ENCODE measurements at regions of chr7 and their contacts with region 1.

Region 1: DNA sequence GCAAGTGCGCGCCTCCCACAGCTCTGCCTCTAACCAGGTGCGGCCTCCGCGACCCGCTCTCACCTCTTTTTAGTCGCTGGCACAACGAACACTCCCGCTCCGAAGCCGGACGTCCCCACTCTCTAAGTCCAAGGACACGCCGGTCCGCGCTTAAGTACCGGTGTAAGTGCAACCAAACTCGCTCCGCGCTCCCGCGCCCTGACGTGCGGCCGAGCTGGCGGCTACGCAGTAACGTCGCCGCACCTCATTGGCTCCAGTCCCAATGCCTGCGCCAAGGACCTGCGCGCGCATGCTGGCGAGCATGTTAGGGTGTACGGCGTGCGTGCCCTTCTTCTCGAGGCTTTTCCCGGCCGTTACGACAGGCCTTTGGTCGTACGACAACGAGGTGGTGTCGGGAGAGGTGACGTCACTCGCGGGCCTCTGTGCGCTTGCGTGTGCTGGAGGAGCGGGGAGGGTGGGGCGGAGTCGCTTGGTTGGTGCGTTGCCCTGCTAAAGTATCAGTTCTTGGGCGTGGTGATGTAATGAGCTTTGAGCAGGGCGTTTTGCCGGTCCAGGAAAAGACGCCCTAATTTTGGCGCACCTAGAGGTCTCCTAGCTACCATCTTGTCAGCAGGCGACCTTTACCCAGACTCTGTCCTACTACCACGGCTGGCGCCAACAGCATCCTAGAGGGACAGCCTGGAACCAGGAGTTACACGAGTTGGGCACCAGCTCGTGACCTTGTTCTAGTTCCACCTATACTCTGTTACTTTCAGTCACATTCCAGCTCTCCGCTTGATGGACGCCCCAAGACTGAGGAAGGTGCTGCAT is at the start of gene CYCS:
- DNase-seq: peak; percentile 93 to 100 (median 94)
- ATAC-seq: peak; percentile 96
- H3K4me3 ChIP-seq: peak within 1 kb of the TSS; percentile 90
- H3K27ac ChIP-seq: peak within 1 kb of the TSS; percentile 96
- H3K4me1 ChIP-seq: peaks cover 2 to 3% of the 10 kb centered on the region in 2 experiments; a peak in 2 of 5 replicates
- H3K27me3 ChIP-seq: no peaks in the 10 kb centered on the region
- CTCF ChIP-seq: no peak
- EP300 ChIP-seq: peak; percentile 50
- POLR2A ChIP-seq: peak; percentile 99
- RAD21 ChIP-seq: no peak
- polyA plus RNA-seq, gene CYCS: 978 to 1,425 TPM

Region 2: DNA sequence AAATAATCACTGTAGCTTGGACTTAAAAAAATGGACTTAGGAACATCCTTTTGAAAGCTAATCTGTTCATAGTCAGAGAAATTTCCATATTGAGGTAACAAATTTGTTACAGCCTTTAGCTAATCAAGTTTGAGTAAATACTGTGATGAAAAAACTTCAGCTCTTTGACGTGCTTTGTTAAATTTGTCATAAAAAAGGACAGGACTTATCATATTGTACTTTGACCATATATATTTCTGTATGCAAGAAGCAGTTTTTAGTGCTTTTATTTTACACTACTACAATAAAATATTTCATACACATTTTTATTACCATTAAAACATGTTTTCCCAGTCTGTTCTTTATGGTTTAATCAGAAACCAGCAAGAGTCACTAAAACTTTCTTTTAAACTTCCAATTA is 14.2 kb after region 1 on chr7:
- CTCF ChIA-PET with region 1: no interaction called
- POLR2A ChIA-PET with region 1: interaction called, 17 read pairs
- in situ Hi-C with region 1: no loop called
- intact Hi-C with region 1: no loop called
- DNase-seq: no peak
- ATAC-seq: no peak
- H3K4me3 ChIP-seq: no peak overlapping the region
- H3K27ac ChIP-seq: no peak overlapping the region
- H3K4me1 ChIP-seq: no peaks in the 10 kb centered on the region
- H3K27me3 ChIP-seq: no peaks in the 10 kb centered on the region
- CTCF ChIP-seq: no peak
- EP300 ChIP-seq: no peak
- POLR2A ChIP-seq: no peak
- RAD21 ChIP-seq: no peak

Region 3: GRCh38 chr7:25148772-25149575 is 23.6 kb after region 1 on chr7:
- CTCF ChIA-PET with region 1: interaction called, 3 read pairs
- POLR2A ChIA-PET with region 1: interaction called, 18 read pairs
- in situ Hi-C with region 1: no loop called
- intact Hi-C with region 1: no loop called
- DNase-seq: peak in 1 of 4 experiments; percentile 28
- ATAC-seq: peak; percentile 75
- H3K4me3 ChIP-seq: no peak overlapping the region
- H3K27ac ChIP-seq: no peak overlapping the region
- H3K4me1 ChIP-seq: no peaks in the 10 kb centered on the region
- H3K27me3 ChIP-seq: no peaks in the 10 kb centered on the region
- CTCF ChIP-seq: peak; percentile 27 to 45 (median 32); a peak in 2 of 6 replicates
- EP300 ChIP-seq: no peak
- POLR2A ChIP-seq: no peak
- RAD21 ChIP-seq: no peak

Region 4: DNA sequence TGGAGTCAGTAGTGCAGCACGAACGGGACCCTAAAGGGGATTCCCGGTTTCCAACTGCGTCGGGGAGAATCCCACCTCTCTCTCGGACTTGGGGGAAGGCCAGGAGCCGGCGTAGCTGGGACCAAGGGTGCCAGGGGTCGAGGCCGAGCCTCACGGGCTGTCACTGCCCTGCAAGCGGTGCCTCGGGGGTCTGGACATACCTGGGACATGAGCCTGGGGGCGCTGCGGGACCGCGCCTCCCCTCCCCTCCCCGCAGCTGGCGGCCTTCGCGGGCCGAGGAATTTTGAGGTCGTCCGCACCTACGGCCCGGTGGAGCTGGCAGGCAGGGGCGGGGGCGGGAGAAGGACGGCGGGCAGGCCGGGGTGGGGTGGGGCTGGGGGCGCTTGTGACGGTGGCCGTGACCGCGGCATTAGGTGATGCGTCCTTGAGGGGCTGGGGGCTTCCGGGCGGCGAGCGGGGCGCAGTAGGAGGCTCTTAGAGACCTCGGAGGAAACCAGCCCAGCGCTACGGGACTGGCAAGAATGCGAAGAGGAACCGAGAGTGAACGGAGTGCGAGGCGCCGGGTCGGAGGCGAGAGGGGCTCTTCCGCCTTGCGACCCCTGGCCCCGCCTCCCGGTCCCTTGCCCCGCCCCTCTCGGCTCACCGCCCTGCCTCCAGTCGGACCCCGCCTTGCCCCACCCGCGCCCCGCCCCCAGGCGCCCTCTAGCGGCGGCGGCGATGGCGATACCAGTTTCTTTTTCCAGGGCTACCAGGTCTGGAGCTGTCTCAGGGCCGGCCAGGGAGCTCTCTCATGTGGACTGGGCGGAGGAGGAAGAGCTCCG is 54.6 kb after region 1 on chr7:
- CTCF ChIA-PET with region 1: no interaction called
- POLR2A ChIA-PET with region 1: interaction called, 11 read pairs
- in situ Hi-C with region 1: no loop called
- intact Hi-C with region 1: no loop called
- DNase-seq: peak; percentile 89 to 99 (median 98)
- ATAC-seq: peak; percentile 96
- H3K4me3 ChIP-seq: peak overlapping the region; percentile 51
- H3K27ac ChIP-seq: peak overlapping the region; percentile 69
- H3K4me1 ChIP-seq: peaks cover 8% of the 10 kb centered on the region in 2 experiments; a peak in 3 of 5 replicates
- H3K27me3 ChIP-seq: no peaks in the 10 kb centered on the region
- CTCF ChIP-seq: peak; percentile 48 to 86 (median 69)
- EP300 ChIP-seq: no peak
- POLR2A ChIP-seq: peak; percentile 78
- RAD21 ChIP-seq: peak in 1 of 2 experiments; percentile 35; a peak in 1 of 4 replicates

Region 5: DNA sequence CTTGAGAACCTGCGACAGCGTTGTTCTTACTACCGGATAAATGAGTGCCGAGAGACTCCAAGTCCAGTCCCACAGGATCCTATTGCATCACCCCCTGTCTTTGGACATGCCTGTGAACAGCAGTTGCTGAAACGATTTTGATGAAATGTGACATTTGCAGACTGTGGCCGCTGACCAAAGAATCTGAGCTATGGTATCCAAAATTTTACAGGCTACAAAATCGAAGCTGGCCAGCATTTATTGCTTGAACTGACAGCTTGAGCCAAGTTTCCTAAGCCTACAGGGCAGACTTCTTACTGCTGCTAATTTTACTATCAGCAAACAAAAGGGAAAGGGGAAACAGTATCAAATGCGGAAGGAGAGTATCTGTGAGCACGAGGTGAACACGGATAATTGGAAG is 115.0 kb after region 1 on chr7:
- CTCF ChIA-PET with region 1: no interaction called
- POLR2A ChIA-PET with region 1: no interaction called
- in situ Hi-C with region 1: no loop called
- intact Hi-C with region 1: no loop called
- DNase-seq: no peak
- ATAC-seq: no peak
- H3K4me3 ChIP-seq: no peak overlapping the region
- H3K27ac ChIP-seq: no peak overlapping the region
- H3K4me1 ChIP-seq: no peaks in the 10 kb centered on the region
- H3K27me3 ChIP-seq: peaks cover 0 to 10% of the 10 kb centered on the region in 2 experiments; a peak in 4 of 5 replicates
- CTCF ChIP-seq: no peak
- EP300 ChIP-seq: no peak
- POLR2A ChIP-seq: no peak
- RAD21 ChIP-seq: no peak

Measured in K562 (cell line).